ENCODE measurements at regions of chr5 and their contacts with region 1.

Region 1: DNA sequence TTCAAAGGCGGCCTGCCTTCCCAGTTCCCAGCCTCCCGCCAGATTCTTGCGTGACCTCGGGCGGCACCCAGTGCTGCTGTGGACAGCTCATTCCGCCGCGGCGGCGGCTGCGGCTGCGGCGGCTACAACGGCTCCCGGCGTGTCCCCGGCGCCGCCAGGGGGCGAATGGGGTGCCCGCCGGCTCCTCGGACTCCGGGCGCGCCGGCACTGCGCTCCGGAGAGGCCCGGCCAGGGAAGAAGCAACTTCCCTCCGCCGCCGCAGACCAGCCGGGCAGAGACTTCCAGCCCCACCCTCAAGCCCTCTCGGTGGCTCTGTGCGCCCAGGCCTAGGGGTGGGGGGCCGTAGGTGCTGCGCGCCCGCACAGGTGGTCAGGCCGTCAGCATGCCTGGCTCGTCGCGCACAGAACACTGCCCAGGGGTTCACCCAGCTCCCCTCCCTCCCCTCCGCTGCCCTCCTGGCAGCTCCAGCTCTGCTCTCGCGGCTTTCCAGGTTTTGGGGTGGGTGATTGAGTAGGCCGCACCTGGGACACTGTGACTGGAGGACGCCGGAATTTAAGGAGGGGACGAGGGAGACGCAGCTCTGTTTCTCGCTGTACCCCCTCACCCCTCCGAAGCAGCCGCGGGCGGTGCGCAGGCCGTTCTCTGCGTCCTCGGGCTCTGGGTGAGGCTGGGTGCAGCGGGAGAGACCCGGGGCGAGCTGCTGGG is 20.2 kb downstream of the IGIP start:
- DNase-seq: peak; percentile 77
- ATAC-seq: peak; percentile 73
- H3K4me3 ChIP-seq: peak overlapping the region in 4 of 5 experiments; percentile 22 to 43 (median 40)
- H3K4me3 Mint-ChIP-seq: peak overlapping the region; percentile 66
- H3K27ac ChIP-seq: no peak overlapping the region
- H3K27ac Mint-ChIP-seq: no peak overlapping the region
- H3K4me1 ChIP-seq: peaks cover 17 to 23% of the 10 kb centered on the region in 2 donors
- H3K4me1 Mint-ChIP-seq: peaks cover 24% of the 10 kb centered on the region
- H3K27me3 ChIP-seq: peaks cover 0 to 27% (median 11%) of the 10 kb centered on the region in 4 experiments
- H3K27me3 Mint-ChIP-seq: peaks cover 20% of the 10 kb centered on the region
- CTCF ChIP-seq: peak; percentile 79

Region 2: DNA sequence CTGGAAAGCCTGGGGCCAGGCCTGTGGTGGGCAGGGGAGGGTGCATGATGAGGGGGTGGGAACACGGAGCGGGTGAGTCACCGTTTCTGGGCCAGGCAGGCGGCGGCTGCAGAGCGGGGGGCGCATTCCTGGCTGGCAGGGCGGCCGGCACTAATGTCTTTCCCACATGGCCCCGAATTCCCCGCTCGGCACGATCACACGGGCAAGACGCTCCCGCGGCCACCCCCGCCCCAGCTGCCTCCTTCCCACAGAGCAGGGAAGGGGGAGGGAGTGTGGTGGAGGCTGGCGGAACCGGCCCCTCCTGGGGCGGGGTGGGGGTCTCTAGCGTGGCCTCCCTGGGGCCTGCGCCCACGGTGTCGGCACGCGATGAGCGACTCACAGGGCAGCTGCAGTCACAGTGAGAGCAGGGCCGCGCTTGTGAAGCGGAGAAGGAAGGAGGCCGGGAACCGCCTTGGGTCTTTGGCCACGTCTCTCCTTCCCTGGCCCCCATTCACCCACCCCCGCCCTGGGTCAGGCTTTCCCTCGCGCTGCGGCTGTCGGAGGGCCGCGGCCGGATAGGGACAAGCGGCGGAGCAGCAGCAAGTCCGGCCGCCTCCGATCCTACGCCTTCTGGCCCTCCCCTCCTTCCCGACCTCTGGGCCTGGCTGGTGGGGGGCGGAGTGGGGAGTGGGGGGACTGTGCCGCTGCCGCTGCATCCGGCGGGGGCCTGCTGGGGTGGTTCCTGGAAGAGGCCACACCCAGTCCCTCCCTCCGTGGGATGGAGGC is 448.9 kb before region 1 on chr5:
- CTCF ChIA-PET with region 1: no interaction called
- POLR2A ChIA-PET with region 1: no interaction called
- intact Hi-C with region 1: no loop called
- DNase-seq: peak; percentile 55
- ATAC-seq: peak; percentile 34
- H3K4me3 ChIP-seq: peak overlapping the region in 4 of 5 experiments; percentile 33 to 56 (median 45)
- H3K4me3 Mint-ChIP-seq: peak overlapping the region; percentile 82
- H3K27ac ChIP-seq: no peak overlapping the region
- H3K27ac Mint-ChIP-seq: peak overlapping the region; percentile 72
- H3K4me1 ChIP-seq: peaks cover 41 to 48% of the 10 kb centered on the region in 2 donors
- H3K4me1 Mint-ChIP-seq: peaks cover 45% of the 10 kb centered on the region
- H3K27me3 ChIP-seq: peaks cover 0 to 35% (median 10%) of the 10 kb centered on the region in 4 experiments
- H3K27me3 Mint-ChIP-seq: peaks cover 17% of the 10 kb centered on the region
- CTCF ChIP-seq: no peak

Region 3: DNA sequence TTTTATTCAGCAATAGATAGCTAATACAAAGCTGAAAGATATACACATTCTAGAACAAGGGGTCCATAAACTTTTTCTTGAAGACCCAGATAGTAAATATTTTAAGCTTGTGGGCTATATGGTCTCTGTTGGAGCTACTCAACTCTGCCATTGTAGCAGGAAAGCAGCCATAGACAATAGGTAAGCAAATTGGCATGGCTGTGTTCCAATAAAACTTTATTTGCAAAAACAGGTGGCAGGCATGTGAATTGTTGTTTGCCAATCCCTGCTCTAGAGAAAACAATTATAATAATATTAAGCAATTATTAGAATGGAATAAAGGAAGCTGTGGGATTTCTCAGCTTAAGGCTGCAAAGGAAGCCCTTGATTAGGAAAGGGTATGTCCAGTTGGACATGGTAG is 64.9 kb before region 1 on chr5:
- CTCF ChIA-PET with region 1: interaction called, 513 read pairs
- POLR2A ChIA-PET with region 1: no interaction called
- intact Hi-C with region 1: no loop called
- DNase-seq: no peak
- ATAC-seq: no peak
- H3K4me3 ChIP-seq: no peak overlapping the region
- H3K4me3 Mint-ChIP-seq: no peak overlapping the region
- H3K27ac ChIP-seq: no peak overlapping the region
- H3K27ac Mint-ChIP-seq: no peak overlapping the region
- H3K4me1 ChIP-seq: no peaks in the 10 kb centered on the region
- H3K4me1 Mint-ChIP-seq: no peaks in the 10 kb centered on the region
- H3K27me3 ChIP-seq: peaks cover 0 to 24% (median 7%) of the 10 kb centered on the region in 4 experiments
- H3K27me3 Mint-ChIP-seq: peaks cover 42% of the 10 kb centered on the region
- CTCF ChIP-seq: no peak

Region 4: DNA sequence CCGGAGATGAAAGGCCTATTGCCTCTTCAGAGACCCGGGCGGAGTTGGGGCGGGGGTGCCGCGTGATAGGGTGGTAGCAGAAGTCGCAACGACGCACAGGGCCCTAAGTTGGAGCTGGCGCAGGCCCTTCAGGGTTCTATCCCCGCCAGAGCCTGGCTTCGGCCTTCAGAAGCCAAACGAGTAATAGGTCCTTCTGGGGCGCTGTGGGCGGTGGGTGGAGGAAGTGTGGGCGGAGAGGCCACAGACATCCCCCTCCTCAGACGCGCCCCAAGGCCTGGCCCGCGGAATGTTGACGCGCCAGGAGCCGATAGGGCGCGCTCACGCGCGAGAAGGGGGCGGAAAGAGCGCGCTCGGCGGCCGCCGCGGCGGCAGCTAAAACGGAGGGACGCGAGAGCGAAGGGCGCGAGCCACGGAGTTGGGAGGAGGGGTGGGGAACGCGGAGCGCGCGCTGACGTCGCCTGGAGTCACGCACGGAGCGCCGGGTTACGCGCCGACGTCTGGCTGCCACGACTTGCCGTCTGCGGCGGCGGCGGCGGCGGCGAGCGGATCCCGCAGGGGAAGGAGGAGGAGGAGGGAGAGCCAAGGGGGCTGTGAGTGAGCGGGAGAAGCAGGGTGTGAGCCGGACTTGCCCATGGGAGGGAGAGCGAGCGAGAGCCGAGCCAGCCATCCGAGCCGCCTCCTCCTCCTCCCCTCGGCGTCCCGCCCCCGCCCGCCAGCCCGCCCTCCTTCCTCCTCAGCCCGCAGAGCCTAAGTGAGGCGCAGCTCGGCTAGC is 38.5 kb before region 1 on chr5:
- CTCF ChIA-PET with region 1: interaction called, 27 read pairs
- POLR2A ChIA-PET with region 1: interaction called, 5 read pairs
- intact Hi-C with region 1: loop called (anchors 2 kb)
- DNase-seq: peak; percentile 98
- ATAC-seq: peak; percentile 85
- H3K4me3 ChIP-seq: peak overlapping the region in 4 of 5 experiments; percentile 60 to 75 (median 68)
- H3K4me3 Mint-ChIP-seq: peak overlapping the region; percentile 96
- H3K27ac ChIP-seq: peak overlapping the region; percentile 97 to 99
- H3K27ac Mint-ChIP-seq: peak overlapping the region; percentile 99
- H3K4me1 ChIP-seq: peaks cover 35% of the 10 kb centered on the region in 2 donors
- H3K4me1 Mint-ChIP-seq: peaks cover 46% of the 10 kb centered on the region
- H3K27me3 ChIP-seq: peaks cover 5 to 23% (median 13%) of the 10 kb centered on the region in 4 experiments
- H3K27me3 Mint-ChIP-seq: peaks cover 20% of the 10 kb centered on the region
- CTCF ChIP-seq: peak; percentile 43

Region 5: GRCh38 chr5:140113699-140114263 is 32.2 kb before region 1 on chr5 and contains the start of gene PURA:
- CTCF ChIA-PET with region 1: interaction called, 44 read pairs
- POLR2A ChIA-PET with region 1: interaction called, 3 read pairs
- intact Hi-C with region 1: loop called (anchors 1 kb)
- DNase-seq: peak; percentile 96
- ATAC-seq: peak; percentile 91
- H3K4me3 ChIP-seq: peak within 1 kb of the TSS; percentile 49 to 82 (median 78)
- H3K4me3 Mint-ChIP-seq: peak within 1 kb of the TSS; percentile 98
- H3K27ac ChIP-seq: peak within 1 kb of the TSS; percentile 72 to 87
- H3K27ac Mint-ChIP-seq: peak within 1 kb of the TSS; percentile 99
- H3K4me1 ChIP-seq: peaks cover 40 to 58% of the 10 kb centered on the region in 2 donors
- H3K4me1 Mint-ChIP-seq: peaks cover 71% of the 10 kb centered on the region
- H3K27me3 ChIP-seq: peaks cover 5 to 19% (median 11%) of the 10 kb centered on the region in 4 experiments
- H3K27me3 Mint-ChIP-seq: peaks cover 11% of the 10 kb centered on the region
- CTCF ChIP-seq: peak; percentile 17
- total RNA-seq, gene PURA: 23.5 and 26.0 TPM in 2 replicates

Region 6: GRCh38 chr5:140131967-140132409 is 14.0 kb before region 1 on chr5:
- CTCF ChIA-PET with region 1: interaction called, 62 read pairs
- POLR2A ChIA-PET with region 1: no interaction called
- intact Hi-C with region 1: no loop called
- DNase-seq: no peak
- ATAC-seq: peak; percentile 24
- H3K4me3 ChIP-seq: no peak overlapping the region
- H3K4me3 Mint-ChIP-seq: no peak overlapping the region
- H3K27ac ChIP-seq: no peak overlapping the region
- H3K27ac Mint-ChIP-seq: no peak overlapping the region
- H3K4me1 ChIP-seq: peaks cover 8 to 11% of the 10 kb centered on the region in 2 donors
- H3K4me1 Mint-ChIP-seq: peaks cover 32% of the 10 kb centered on the region
- H3K27me3 ChIP-seq: no peaks in the 10 kb centered on the region
- H3K27me3 Mint-ChIP-seq: no peaks in the 10 kb centered on the region
- CTCF ChIP-seq: no peak

Region 7: DNA sequence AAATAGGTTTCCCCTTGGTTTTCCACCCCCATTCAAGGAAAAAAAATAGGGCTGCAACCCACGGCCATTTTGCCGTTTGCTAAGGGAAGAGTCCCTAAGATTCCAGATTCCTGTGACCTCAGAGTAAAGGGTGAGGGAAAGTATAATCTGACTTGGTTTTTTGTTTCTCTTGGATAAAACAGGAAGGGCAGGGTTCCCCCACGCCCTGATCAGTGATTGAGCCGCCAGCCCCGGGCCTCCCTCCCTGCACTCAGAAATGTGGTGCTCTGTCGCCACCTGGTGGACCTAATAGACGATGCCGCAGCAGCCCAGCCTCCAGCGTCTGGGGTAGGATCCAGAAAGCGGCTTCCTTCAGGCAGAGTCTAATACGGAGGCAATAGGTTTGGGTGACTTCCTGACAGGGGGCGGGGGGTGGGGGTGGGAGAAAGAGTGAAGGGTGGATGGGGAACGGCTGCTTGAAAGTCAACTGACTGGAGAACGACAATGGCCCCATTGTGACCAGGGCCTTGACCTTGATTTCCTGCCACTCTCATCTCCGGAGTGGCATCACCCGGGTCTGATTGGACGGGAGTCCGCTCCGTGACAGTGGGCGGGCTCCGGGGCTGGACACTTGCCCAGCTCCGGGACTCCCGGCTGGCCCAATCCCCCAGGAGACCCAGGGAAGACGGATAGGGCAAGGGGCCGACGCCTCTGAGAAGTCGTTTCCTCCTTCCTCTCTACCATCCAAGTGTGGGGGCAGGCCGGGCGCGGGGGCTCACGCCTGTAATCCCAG is 11.2 kb after region 1 on chr5:
- CTCF ChIA-PET with region 1: interaction called, 100 read pairs
- POLR2A ChIA-PET with region 1: no interaction called
- intact Hi-C with region 1: loop called (anchors 1 kb)
- DNase-seq: peak; percentile 89
- ATAC-seq: peak; percentile 100
- H3K4me3 ChIP-seq: peak overlapping the region in 3 of 5 experiments; percentile 1 to 26 (median 20)
- H3K4me3 Mint-ChIP-seq: peak overlapping the region; percentile 68
- H3K27ac ChIP-seq: no peak overlapping the region
- H3K27ac Mint-ChIP-seq: no peak overlapping the region
- H3K4me1 ChIP-seq: peaks cover 7 to 17% of the 10 kb centered on the region in 2 donors
- H3K4me1 Mint-ChIP-seq: peaks cover 9% of the 10 kb centered on the region
- H3K27me3 ChIP-seq: no peaks in the 10 kb centered on the region
- H3K27me3 Mint-ChIP-seq: no peaks in the 10 kb centered on the region
- CTCF ChIP-seq: peak; percentile 88

Measured in B cell (primary cell).